Gastrocnemius medialis (tissue), 4 donors: ENCODE measurements at regions of chr2 and their contacts with region 1.

Region 1: GRCh38 chr2:171598713-171599319 is 76.5 kb downstream of the CYBRD1 start:
- DNase-seq: peak in 1 of 2 donors; percentile 4
- ATAC-seq: peak; percentile 45 to 60
- H3K4me3 ChIP-seq: no peak overlapping the region
- H3K27ac ChIP-seq: no peak overlapping the region
- H3K4me1 ChIP-seq: no peaks in the 10 kb centered on the region
- H3K27me3 ChIP-seq: no peaks in the 10 kb centered on the region
- CTCF ChIP-seq: peak; percentile 43 to 68 (median 46)
- POLR2A ChIP-seq: no peak

Region 2: GRCh38 chr2:172128484-172128883 is 529.7 kb after region 1 on chr2:
- in situ Hi-C with region 1: loop called in 3 of 4 experiments (anchors 25 kb)
- intact Hi-C with region 1: loop called (anchors 5 kb)
- DNase-seq: no peak
- ATAC-seq: no peak
- H3K4me3 ChIP-seq: no peak overlapping the region
- H3K27ac ChIP-seq: no peak overlapping the region
- H3K4me1 ChIP-seq: no peaks in the 10 kb centered on the region
- H3K27me3 ChIP-seq: no peaks in the 10 kb centered on the region
- CTCF ChIP-seq: no peak
- POLR2A ChIP-seq: no peak

Region 3: DNA sequence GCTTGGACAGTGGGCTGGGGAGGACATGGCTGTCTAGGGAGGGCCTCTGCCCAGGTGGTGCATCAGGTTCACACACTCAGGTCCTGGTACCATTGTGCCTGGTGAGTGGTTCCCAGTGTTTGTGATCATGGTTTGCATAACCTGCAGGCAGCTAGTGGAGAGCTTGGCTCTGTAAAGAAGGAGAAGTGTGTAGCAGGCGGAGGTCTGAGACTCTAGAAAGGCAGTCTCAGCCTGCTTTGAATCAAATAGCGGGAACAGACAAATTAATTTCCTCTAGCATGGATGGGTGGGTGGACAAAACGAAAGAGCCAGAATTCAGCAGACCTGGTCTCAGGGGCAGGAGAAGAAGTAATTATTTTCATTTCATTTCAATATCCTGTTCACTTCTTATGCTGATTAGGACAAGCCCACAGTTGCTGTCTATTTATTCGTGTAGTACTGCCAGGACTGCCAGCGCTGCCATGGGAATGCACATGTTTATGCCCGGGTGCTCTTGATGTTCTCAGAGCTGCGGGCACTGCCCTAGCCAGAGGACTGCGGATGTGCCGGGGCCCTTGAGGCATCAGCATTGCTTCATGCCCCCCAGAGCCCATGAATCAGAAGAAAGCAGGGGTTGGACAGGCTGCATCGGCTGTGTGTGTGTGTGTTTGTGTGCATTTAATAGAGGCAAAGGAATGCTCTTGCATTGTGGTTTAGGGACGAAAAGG is 549.3 kb after region 1 on chr2:
- in situ Hi-C with region 1: loop called in 1 of 4 experiments (anchors 25 kb)
- intact Hi-C with region 1: no loop called
- DNase-seq: no peak
- ATAC-seq: no peak
- H3K4me3 ChIP-seq: no peak overlapping the region
- H3K27ac ChIP-seq: no peak overlapping the region
- H3K4me1 ChIP-seq: no peaks in the 10 kb centered on the region
- H3K27me3 ChIP-seq: no peaks in the 10 kb centered on the region
- CTCF ChIP-seq: no peak
- POLR2A ChIP-seq: no peak